ENCODE measurements at regions of chr1 and their contacts with region 1.

Region 1: GRCh38 chr1:47725992-47726855 is 271.0 kb downstream of the TRABD2B start:
- DNase-seq: peak; percentile 84 to 88
- H3K4me3 ChIP-seq: peak overlapping the region; percentile 10 to 37
- H3K27ac ChIP-seq: no peak overlapping the region
- H3K4me1 ChIP-seq: peaks cover 0 to 18% (median 14%) of the 10 kb centered on the region in 4 donors
- H3K27me3 ChIP-seq: peaks cover 0 to 28% of the 10 kb centered on the region in 2 donors
- CTCF ChIP-seq: peak; percentile 88 to 90

Region 2: DNA sequence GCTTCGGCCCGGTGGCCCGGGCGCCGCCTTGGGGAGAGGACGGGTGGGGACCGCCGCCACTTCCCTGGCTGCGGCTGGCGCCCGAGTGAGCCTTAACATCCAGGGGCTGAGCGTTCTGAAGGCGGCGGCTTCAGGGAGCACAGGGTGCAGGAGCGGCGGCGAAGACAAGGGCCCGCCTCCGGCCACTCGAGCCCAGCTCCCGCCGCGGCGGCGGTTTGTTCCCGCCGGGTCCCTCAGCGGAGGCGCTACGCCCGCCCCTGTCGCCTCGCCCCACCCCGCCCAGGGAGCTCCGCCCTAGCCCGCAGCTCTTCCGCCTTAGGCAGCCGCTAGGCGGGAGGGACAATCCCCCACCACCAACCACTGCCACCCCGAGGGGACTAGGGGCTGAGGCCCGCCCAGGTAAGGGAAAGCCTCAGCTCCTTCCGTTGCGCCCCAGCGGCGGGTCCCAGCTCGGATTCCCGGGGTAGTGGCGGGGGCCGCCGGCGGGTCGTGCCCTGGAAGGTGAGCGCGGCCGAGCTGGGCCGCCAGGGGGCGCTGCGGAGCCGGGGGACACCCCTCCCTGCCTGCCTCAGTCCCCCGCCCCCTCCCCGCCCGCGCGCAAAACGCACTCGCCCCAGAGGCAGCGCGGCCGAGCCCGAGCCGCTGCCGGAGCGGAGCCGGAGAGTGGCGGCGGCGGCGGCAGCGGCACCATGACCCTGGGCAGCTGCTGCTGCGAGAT is 288.6 kb before region 1 on chr1 and contains the start of gene FOXD2:
- intact Hi-C with region 1: loop called (anchors 1 kb)
- DNase-seq: peak; percentile 77 to 93
- H3K4me3 ChIP-seq: peak within 1 kb of the TSS; percentile 76 to 85
- H3K27ac ChIP-seq: peak within 1 kb of the TSS; percentile 86 to 89
- H3K4me1 ChIP-seq: peaks cover 0 to 61% (median 38%) of the 10 kb centered on the region in 4 donors
- H3K27me3 ChIP-seq: peaks cover 0 to 21% of the 10 kb centered on the region in 2 donors
- CTCF ChIP-seq: peak; percentile 99 to 100

Region 3: GRCh38 chr1:47771751-47772180 is 45.5 kb after region 1 on chr1:
- intact Hi-C with region 1: no loop called
- DNase-seq: no peak
- H3K4me3 ChIP-seq: no peak overlapping the region
- H3K27ac ChIP-seq: peak overlapping the region; percentile 72
- H3K4me1 ChIP-seq: peaks cover 0 to 49% (median 39%) of the 10 kb centered on the region in 4 donors
- H3K27me3 ChIP-seq: no peaks in the 10 kb centered on the region
- CTCF ChIP-seq: no peak

Region 4: DNA sequence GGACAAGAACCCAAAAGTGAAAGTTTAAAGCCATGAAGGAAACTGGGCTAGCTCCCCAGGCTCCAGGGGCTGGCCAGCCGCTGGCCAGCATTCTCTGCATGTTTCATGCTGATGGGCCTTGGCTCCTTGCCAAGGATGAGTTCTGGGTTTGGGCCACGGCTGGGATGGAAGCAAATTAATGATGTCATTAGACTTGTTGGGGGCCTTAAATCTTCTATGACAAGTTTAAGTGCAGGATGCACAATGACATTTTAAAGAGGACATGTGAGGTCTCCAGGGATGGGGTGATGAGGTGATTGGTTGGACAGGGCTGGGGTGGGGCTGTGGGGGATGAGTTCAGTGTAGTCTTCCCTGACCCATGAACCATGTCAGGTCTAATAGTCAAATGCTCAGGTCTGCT is 71.4 kb after region 1 on chr1:
- intact Hi-C with region 1: no loop called
- DNase-seq: no peak
- H3K4me3 ChIP-seq: no peak overlapping the region
- H3K27ac ChIP-seq: peak overlapping the region; percentile 27 to 38
- H3K4me1 ChIP-seq: peaks cover 0 to 39% (median 21%) of the 10 kb centered on the region in 4 donors
- H3K27me3 ChIP-seq: no peaks in the 10 kb centered on the region
- CTCF ChIP-seq: no peak